Activated T-helper 1 cell treated with anti-CD3 and anti-CD28 coated beads, Interleukin-12 subunit alpha, Interleukin-12 subunit beta, Interleukin-2, Interleukin-4 antibody, amounts not matched to agents 30 ng/mL and 10 ng/mL and 1 ng/mL, durations not matched to agents 14 hours and 24 hours and 36 hours (primary cell): ENCODE measurements at regions of chr2 and their contacts with region 1.

Region 1: DNA sequence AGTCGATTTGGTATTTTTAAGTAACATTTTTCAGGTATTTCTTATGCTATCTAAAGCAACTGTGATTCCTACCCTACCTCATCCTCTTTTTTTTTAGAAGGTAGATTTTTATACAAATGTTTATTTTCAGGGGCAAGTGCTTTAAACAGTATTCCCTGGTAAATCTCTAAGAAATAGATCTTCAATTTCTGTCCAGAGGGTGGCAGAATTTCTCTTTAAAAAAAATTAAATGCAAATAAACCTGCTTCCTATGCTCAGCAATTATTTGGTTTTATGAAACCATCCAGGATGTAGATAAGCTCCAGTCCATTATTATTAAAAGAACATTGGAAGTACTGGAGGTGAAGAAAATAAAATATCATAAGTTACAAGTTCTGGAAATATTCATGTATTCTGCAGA is 191.9 kb downstream of the MYO3B start:
- DNase-seq: no peak
- H3K4me3 Mint-ChIP-seq: no peak overlapping the region
- H3K27ac Mint-ChIP-seq: no peak overlapping the region
- H3K4me1 Mint-ChIP-seq: peaks cover 44% of the 10 kb centered on the region
- H3K27me3 Mint-ChIP-seq: peaks cover 12% of the 10 kb centered on the region

Region 2: GRCh38 chr2:170396799-170397459 is 27.0 kb after region 1 on chr2:
- intact Hi-C with region 1: no loop called
- DNase-seq: no peak
- H3K4me3 Mint-ChIP-seq: no peak overlapping the region
- H3K27ac Mint-ChIP-seq: no peak overlapping the region
- H3K4me1 Mint-ChIP-seq: no peaks in the 10 kb centered on the region
- H3K27me3 Mint-ChIP-seq: peaks cover 33% of the 10 kb centered on the region

Region 3: GRCh38 chr2:170770606-170771420 is 400.9 kb after region 1 on chr2:
- intact Hi-C with region 1: loop called (anchors 5 kb)
- DNase-seq: peak; percentile 58
- H3K4me3 Mint-ChIP-seq: peak overlapping the region; percentile 83
- H3K27ac Mint-ChIP-seq: peak overlapping the region; percentile 55
- H3K4me1 Mint-ChIP-seq: peaks cover 7% of the 10 kb centered on the region
- H3K27me3 Mint-ChIP-seq: peaks cover 45% of the 10 kb centered on the region